ENCODE measurements at regions of chr12 and their contacts with region 1.

Region 1: DNA sequence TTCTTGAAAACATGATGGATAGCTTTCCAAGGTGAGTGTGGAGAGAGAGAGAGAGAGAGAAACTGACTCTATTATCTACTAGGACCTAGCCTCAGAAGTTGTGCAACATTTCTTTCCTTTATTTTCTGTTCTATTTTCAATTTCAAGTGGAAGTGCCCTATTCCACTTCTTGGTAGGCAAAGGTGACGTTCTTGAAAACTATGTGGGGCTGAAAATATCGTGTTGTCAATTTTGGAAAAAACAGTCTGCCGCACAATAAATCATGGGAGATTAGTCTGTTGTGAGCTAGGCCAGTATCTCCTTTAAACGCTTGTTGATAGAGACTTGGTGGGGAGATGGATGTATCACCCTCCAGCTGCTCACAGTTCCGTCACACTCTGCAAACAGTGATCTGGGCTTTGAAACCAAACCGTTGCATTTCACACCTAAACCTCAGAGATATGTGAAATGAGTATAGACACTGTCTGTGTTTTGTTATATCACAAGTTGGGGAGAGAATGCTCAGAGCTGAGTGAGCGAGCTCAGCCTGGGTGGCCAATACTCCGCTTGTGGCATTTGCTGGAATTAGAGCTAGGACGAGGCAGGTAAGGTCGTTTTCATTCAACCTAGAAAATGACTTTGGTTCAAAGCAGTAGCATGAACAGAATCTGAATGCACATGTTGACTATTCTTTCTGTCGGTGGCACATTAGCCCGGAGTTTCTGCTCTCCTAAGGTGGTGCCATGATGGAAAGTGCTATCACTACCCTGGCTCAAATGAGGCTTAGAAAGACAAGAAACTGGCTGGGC is 75.1 kb upstream of the ST8SIA1 start:
- DNase-seq: no peak
- ATAC-seq: no peak
- H3K4me3 ChIP-seq: no peak overlapping the region
- H3K27ac ChIP-seq: no peak overlapping the region
- H3K4me1 ChIP-seq: no peaks in the 10 kb centered on the region
- H3K27me3 ChIP-seq: no peaks in the 10 kb centered on the region
- CTCF ChIP-seq: no peak

Region 2: GRCh38 chr12:21906919-21907493 is 502.6 kb before region 1 on chr12:
- CTCF ChIA-PET with region 1: interaction called, 15 read pairs
- POLR2A ChIA-PET with region 1: no interaction called
- in situ Hi-C with region 1: no loop called
- intact Hi-C with region 1: no loop called
- DNase-seq: no peak
- ATAC-seq: no peak
- H3K4me3 ChIP-seq: no peak overlapping the region
- H3K27ac ChIP-seq: no peak overlapping the region
- H3K4me1 ChIP-seq: no peaks in the 10 kb centered on the region
- H3K27me3 ChIP-seq: no peaks in the 10 kb centered on the region
- CTCF ChIP-seq: no peak